ENCODE measurements at regions of chr16 and their contacts with region 1.

Region 1: GRCh38 chr16:77437859-77438258 is 3.0 kb upstream of the ADAMTS18 start:
- DNase-seq: no peak
- H3K4me3 ChIP-seq: no peak overlapping the region
- H3K27ac ChIP-seq: no peak overlapping the region
- H3K27me3 ChIP-seq: peaks cover 0 to 50% (median 27%) of the 10 kb centered on the region in 45 donors
- CTCF ChIP-seq: peak in 7 of 56 donors; percentile 9 to 49 (median 39)

Region 2: GRCh38 chr16:77584205-77584859 is 146.5 kb after region 1 on chr16:
- intact Hi-C with region 1: loop called in 1 of 2 experiments (anchors 5 kb)
- DNase-seq: peak in 6 of 10 donors; percentile 25 to 70 (median 52)
- H3K4me3 ChIP-seq: no peak overlapping the region
- H3K27ac ChIP-seq: no peak overlapping the region
- H3K27me3 ChIP-seq: peaks cover 0 to 31% (median 7%) of the 10 kb centered on the region in 45 donors
- CTCF ChIP-seq: peak; percentile 84 to 99 (median 94)